Left colon (tissue), 2 donors: ENCODE measurements at regions of chr12 and their contacts with region 1.

Region 1: GRCh38 chr12:2284857-2285256 is 232.1 kb downstream of the CACNA1C start:
- DNase-seq: peak; percentile 72 to 89
- ATAC-seq: peak; percentile 89

Region 2: GRCh38 chr12:2057041-2057794 is 227.6 kb before region 1 on chr12:
- intact Hi-C with region 1: loop called in 1 of 2 experiments (anchors 10 kb)
- DNase-seq: peak; percentile 62 to 76
- ATAC-seq: peak; percentile 62

Region 3: GRCh38 chr12:2494486-2495192 is 209.8 kb after region 1 on chr12:
- intact Hi-C with region 1: no loop called
- DNase-seq: peak in 1 of 2 donors; percentile 19
- ATAC-seq: peak; percentile 79